ENCODE measurements at regions of chr20 and their contacts with region 1.

Region 1: GRCh38 chr20:10667077-10667401 is 6.8 kb downstream of the JAG1 start:
- DNase-seq: peak; percentile 39 to 60
- ATAC-seq: peak in 4 of 8 donors; percentile 1 to 15 (median 8)
- H3K4me3 ChIP-seq: peak overlapping the region in 8 of 10 donors; percentile 14 to 98 (median 82)
- H3K27ac ChIP-seq: peak overlapping the region; percentile 5 to 82 (median 62)
- H3K4me1 ChIP-seq: peaks cover 14 to 88% (median 65%) of the 10 kb centered on the region in 9 donors
- H3K27me3 ChIP-seq: no peaks in the 10 kb centered on the region
- CTCF ChIP-seq: no peak

Region 2: GRCh38 chr20:10558635-10559187 is 108.3 kb before region 1 on chr20:
- intact Hi-C with region 1: loop called in 8 of 10 experiments (anchors 5 to 10 kb)
- DNase-seq: no peak
- ATAC-seq: peak in 3 of 8 donors; percentile 42 to 65 (median 47)
- H3K4me3 ChIP-seq: no peak overlapping the region
- H3K27ac ChIP-seq: peak overlapping the region in 4 of 10 donors; percentile 2 to 25 (median 16)
- H3K4me1 ChIP-seq: peaks cover 0 to 11% (median 0%) of the 10 kb centered on the region in 9 donors
- H3K27me3 ChIP-seq: no peaks in the 10 kb centered on the region
- CTCF ChIP-seq: peak in 3 of 9 donors; percentile 15 to 29 (median 24)

Measured in heart right ventricle (tissue), 16 donors.